Breast epithelium (tissue), 4 donors: ENCODE measurements at regions of chr20 and their contacts with region 1.

Region 1: DNA sequence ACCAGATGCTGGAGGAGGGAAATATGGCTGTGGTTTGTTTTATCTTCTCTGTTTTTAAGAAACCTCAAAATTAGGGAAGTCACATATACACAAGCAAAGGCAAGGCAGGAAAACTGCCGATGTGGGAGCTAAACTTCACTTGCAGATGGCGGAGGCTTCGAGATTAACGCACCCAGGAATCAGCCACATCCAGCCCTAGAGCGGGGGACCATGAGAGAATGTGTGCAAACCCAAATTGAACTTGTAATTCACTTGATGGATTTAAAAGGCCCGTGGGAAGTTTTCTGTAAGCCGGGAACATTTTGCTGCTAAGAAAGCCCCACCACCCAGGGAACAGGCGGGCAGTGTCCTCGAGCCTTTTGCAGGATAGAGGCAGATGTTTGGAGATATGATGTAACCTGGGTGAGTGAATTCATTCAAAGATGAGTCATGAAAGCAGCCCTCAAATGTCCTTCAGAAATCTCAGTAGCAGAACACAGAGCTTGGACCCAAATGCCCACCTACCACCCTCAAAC is 39.9 kb downstream of the PREX1 start:
- DNase-seq: no peak
- H3K4me3 ChIP-seq: no peak overlapping the region
- H3K27ac ChIP-seq: peak overlapping the region; percentile 17 to 66
- H3K4me1 ChIP-seq: peaks cover 0 to 7% of the 10 kb centered on the region in 2 donors
- H3K27me3 ChIP-seq: no peaks in the 10 kb centered on the region
- CTCF ChIP-seq: no peak
- POLR2A ChIP-seq: no peak

Region 2: DNA sequence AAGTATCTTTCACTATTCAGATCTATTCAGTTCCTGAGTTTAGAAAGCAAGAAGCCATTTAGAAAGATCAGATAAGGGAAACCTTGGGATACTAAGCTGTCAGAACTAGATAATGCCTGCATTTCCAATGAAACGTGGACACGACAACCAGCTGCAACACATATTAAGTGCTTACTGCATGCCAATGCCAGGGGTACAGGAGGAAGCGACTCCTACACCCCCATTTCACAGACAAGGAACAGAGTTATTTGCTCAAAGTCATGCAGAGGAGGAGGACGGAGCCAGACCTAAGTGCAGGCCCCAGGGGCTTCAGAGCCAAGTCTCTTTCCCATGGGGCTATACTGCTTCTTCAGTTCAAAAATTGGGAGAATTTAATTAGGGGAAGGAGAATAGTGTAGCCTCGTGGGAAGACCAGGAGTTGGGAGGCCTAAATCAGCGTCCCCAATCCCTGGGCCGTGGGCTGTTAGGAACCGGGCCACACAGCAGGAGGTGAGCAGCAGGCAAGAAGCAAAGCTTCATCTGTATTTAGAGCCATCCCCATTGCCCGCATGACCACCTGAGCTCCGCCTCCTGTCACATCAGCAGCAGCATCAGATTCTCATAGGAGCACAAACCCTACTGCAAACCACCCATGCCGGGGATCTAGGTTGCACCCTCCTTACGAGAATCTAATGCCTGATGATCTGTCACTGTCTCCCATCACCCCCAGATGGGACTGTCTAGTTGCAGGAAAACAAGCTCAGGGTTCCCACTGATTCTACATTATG is 22.4 kb before region 1 on chr20:
- intact Hi-C with region 1: loop called (anchors 2 kb)
- DNase-seq: no peak
- H3K4me3 ChIP-seq: no peak overlapping the region
- H3K27ac ChIP-seq: no peak overlapping the region
- H3K4me1 ChIP-seq: no peaks in the 10 kb centered on the region
- H3K27me3 ChIP-seq: no peaks in the 10 kb centered on the region
- CTCF ChIP-seq: no peak
- POLR2A ChIP-seq: no peak